HepG2 (cell line): ENCODE measurements at regions of chr4 and their contacts with region 1.

Region 1: DNA sequence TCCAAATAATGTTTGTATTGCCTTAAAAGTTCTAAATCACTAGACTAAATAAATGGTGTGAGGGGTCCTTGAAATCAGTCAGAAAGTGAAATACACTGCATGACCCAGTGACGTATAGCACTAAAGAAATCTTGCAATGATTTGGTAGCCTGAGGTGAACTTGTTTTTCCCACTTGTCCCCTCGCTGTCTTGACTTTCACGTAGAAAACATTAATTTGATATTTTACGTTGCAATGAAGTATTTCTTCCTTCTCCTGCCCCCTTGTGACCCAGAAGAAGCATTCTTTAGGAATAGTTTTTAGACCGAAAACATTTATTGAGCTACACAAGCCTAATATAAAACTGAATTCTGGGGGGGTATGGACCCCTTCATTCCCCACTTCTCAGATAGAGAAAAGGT is 3.7 kb downstream of the KLB start:
- DNase-seq: no peak
- ATAC-seq: no peak
- H3K4me3 ChIP-seq: peak overlapping the region; percentile 62 to 99 (median 75)
- H3K27ac ChIP-seq: peak overlapping the region; percentile 96
- H3K4me1 ChIP-seq: peaks cover 37% of the 10 kb centered on the region
- H3K27me3 ChIP-seq: no peaks in the 10 kb centered on the region; a peak in 1 of 5 replicates
- CTCF ChIP-seq: no peak
- EP300 ChIP-seq: no peak
- POLR2A ChIP-seq: no peak
- RAD21 ChIP-seq: no peak

Region 2: DNA sequence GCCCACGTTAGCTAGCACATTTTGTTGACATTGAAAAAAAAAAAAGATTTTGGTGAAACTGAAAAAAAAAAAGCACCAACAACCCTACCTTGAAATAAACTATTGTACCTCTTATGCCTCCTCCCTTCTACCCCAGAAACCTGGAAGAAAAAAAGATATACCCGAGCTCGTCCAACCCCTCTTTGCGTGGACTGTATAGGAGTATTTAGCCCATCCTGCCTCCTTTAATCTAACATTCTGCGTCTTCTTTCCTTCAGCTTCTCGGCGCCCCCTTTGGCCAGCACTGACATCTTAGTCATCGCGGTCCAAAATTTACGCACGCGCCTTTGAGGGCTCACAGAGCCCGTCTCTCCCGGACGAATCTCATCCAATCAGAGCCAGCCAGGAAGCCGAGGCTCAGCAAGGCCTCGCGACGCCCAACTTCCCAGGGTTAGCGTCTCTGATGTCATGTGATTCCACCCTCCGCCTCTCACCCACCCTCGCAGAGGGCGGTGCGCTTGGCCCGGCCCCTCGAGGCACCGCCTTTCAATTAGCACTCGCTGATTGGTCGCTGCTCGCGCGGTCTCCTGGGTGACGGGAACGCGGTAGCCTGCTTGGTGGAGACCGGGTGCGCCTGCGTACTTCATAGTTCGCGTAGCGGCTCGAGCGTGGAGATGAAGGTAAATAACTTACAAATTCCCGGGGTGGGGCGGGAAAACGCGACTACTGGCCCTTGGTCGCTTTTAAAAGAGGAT is 228.3 kb before region 1 on chr4 and contains the start of gene WDR19:
- CTCF ChIA-PET with region 1: no interaction called
- POLR2A ChIA-PET with region 1: interaction called, 3 read pairs
- in situ Hi-C with region 1: no loop called
- intact Hi-C with region 1: loop called (anchors 10 kb)
- DNase-seq: peak; percentile 99
- ATAC-seq: peak; percentile 99
- H3K4me3 ChIP-seq: peak within 1 kb of the TSS; percentile 91 to 96 (median 93)
- H3K27ac ChIP-seq: peak within 1 kb of the TSS; percentile 47
- H3K4me1 ChIP-seq: peaks cover 20% of the 10 kb centered on the region
- H3K27me3 ChIP-seq: no peaks in the 10 kb centered on the region
- CTCF ChIP-seq: peak; percentile 69
- EP300 ChIP-seq: no peak
- POLR2A ChIP-seq: peak in 1 of 2 experiments; percentile 33; a peak in 2 of 4 replicates
- RAD21 ChIP-seq: 0 out of 2 replicates have a peak, but pooled peaks have one; percentile 11
- total RNA-seq, gene WDR19: 20.3 and 22.9 TPM in 2 replicates

Region 3: GRCh38 chr4:39324897-39325613 is 85.4 kb before region 1 on chr4:
- CTCF ChIA-PET with region 1: no interaction called
- POLR2A ChIA-PET with region 1: interaction called, 5 read pairs
- in situ Hi-C with region 1: no loop called
- intact Hi-C with region 1: loop called (anchors 5 kb)
- DNase-seq: peak; percentile 68
- ATAC-seq: peak; percentile 90
- H3K4me3 ChIP-seq: no peak overlapping the region
- H3K27ac ChIP-seq: peak overlapping the region; percentile 48
- H3K4me1 ChIP-seq: peaks cover 64% of the 10 kb centered on the region
- H3K27me3 ChIP-seq: no peaks in the 10 kb centered on the region
- CTCF ChIP-seq: no peak
- EP300 ChIP-seq: 0 out of 4 replicates have a peak, but pooled peaks of 1 of the 2 experiments have one; percentile 11
- POLR2A ChIP-seq: no peak
- RAD21 ChIP-seq: no peak

Region 4: DNA sequence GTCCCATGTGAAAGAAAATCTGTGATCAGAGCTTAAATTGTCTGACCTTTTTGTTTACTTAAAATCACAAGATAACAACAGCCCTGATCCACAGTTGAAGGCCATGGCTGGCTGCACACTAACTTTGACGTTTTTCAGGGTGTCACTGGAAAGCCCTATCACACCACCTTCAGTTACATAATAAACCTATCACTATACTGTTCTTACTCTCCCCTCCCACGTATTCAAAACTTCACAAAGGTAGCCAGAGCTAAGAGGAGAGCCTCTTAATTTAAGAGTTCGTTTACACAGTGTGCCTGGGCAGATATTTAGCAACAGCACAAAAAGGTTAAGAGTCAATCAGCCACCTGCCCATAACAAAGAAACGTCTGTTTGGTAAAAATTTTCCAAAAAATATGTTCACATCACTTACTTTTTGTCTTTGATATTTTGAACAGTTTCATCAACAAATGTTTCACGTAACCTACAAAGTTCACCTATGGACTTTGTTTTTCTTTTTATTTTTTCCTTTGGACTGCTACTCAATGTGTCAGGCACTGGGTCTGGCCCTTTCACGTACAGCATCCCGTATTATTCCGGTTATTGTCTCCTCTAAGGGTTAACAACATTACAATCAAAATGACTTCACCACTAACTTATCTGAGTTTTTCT is 69.2 kb before region 1 on chr4:
- CTCF ChIA-PET with region 1: no interaction called
- POLR2A ChIA-PET with region 1: interaction called, 8 read pairs
- in situ Hi-C with region 1: no loop called
- intact Hi-C with region 1: loop called (anchors 2 kb)
- DNase-seq: peak; percentile 96
- ATAC-seq: peak; percentile 97
- H3K4me3 ChIP-seq: peak overlapping the region in 1 of 3 experiments; percentile 27; a peak in 1 of 6 replicates
- H3K27ac ChIP-seq: peak overlapping the region; percentile 80
- H3K4me1 ChIP-seq: peaks cover 78% of the 10 kb centered on the region
- H3K27me3 ChIP-seq: no peaks in the 10 kb centered on the region
- CTCF ChIP-seq: no peak
- EP300 ChIP-seq: peak; percentile 15 to 84; a peak in 3 of 4 replicates
- POLR2A ChIP-seq: no peak
- RAD21 ChIP-seq: no peak

Region 5: GRCh38 chr4:39365830-39366771 is 44.3 kb before region 1 on chr4 and contains the start of gene RFC1:
- CTCF ChIA-PET with region 1: no interaction called
- POLR2A ChIA-PET with region 1: interaction called, 53 read pairs
- in situ Hi-C with region 1: loop called (anchors 10 kb)
- intact Hi-C with region 1: loop called (anchors 1 kb)
- DNase-seq: peak; percentile 87
- ATAC-seq: peak; percentile 81
- H3K4me3 ChIP-seq: peak within 1 kb of the TSS; percentile 76 to 85 (median 84)
- H3K27ac ChIP-seq: peak within 1 kb of the TSS; percentile 88
- H3K4me1 ChIP-seq: peaks cover 47% of the 10 kb centered on the region
- H3K27me3 ChIP-seq: no peaks in the 10 kb centered on the region; a peak in 1 of 5 replicates
- CTCF ChIP-seq: no peak; the same call in 1 of the 2 replicates
- EP300 ChIP-seq: no peak
- POLR2A ChIP-seq: peak; percentile 65 to 77
- RAD21 ChIP-seq: 0 out of 2 replicates have a peak, but pooled peaks have one; percentile 14
- total RNA-seq, gene RFC1: 78.8 and 118 TPM in 2 replicates

Region 6: DNA sequence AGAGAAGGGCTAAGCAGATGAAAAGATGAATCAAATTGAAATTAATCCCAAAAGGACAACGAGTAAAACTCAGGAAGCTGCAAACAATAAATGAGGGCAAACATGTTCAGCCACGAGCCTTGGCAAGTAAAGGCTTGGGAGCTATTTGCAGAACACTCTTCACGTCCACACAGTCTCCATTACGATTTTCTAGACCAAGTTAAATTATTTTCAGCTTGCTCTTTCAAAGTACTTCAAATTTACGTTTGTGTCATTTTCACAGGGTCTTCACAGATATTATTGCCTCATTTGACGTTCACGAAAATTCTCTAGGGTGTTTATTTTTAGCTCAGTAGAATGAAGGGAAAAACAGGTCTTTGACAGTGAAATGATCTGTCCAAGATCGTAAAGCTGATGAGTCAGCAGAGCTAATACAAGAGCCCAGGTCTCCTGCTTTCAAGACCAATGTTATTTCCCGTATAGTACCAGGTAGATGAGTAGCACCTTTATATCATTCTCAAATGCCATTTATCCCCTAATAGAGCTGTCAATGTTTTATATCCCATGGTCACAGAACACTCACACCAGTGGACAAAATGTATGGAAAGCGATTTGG is 17.2 kb after region 1 on chr4:
- CTCF ChIA-PET with region 1: no interaction called
- POLR2A ChIA-PET with region 1: interaction called, 121 read pairs
- in situ Hi-C with region 1: no loop called
- intact Hi-C with region 1: loop called (anchors 1 kb)
- DNase-seq: no peak
- ATAC-seq: no peak
- H3K4me3 ChIP-seq: no peak overlapping the region; a peak in 1 of 6 replicates
- H3K27ac ChIP-seq: peak overlapping the region; percentile 52
- H3K4me1 ChIP-seq: peaks cover 89% of the 10 kb centered on the region
- H3K27me3 ChIP-seq: no peaks in the 10 kb centered on the region
- CTCF ChIP-seq: no peak
- EP300 ChIP-seq: no peak
- POLR2A ChIP-seq: no peak
- RAD21 ChIP-seq: no peak

Region 7: DNA sequence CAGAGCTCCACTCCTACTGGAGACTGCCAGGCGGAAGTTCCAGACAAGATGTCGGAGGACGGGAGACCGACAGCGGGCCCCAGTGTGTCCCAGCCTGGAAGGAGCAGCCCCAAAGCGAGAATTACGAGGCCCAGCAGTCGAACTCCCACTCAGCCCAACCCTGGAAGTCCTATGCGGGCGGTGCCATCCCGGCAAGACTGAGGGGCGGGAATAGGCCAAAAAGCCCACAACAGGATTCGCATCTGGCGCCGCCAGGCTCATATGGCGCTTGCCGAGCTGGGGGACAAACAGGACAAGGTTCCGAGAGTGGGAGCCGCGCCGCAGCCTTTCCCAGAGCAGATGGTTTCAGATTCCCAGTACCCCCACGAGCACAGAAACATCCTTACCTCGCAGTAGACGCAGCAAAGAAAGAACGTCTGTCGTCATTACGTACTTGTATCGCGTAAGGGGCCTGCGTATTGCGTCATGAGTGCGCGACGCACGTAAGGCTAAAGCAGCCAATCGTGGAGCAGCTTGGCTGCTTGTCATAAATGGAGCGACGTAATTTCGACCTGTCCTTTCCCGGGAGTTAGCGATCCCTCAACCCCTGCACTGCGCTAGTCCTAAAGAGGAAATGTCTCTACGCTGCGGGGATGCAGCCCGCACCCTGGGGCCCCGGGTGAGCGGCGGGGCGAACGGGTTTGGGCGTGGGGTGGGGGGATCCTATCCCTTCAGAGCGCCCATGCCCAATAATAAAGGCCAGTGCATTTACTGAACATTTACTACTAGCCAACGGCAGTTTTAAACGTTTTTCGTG is 48.3 kb after region 1 on chr4 and contains the starts of genes LIAS and RPL9:
- CTCF ChIA-PET with region 1: no interaction called
- POLR2A ChIA-PET with region 1: interaction called, 50 read pairs
- in situ Hi-C with region 1: no loop called
- intact Hi-C with region 1: loop called (anchors 2 kb)
- DNase-seq: peak; percentile 96
- ATAC-seq: peak; percentile 95
- H3K4me3 ChIP-seq: peak within 1 kb of the TSS; percentile 84 to 97 (median 93)
- H3K27ac ChIP-seq: peak within 1 kb of the TSS; percentile 87
- H3K4me1 ChIP-seq: peaks cover 51% of the 10 kb centered on the region
- H3K27me3 ChIP-seq: no peaks in the 10 kb centered on the region; a peak in 1 of 5 replicates
- CTCF ChIP-seq: no peak
- EP300 ChIP-seq: peak in 1 of 2 experiments; percentile 25; a peak in 1 of 4 replicates
- POLR2A ChIP-seq: peak; percentile 97 to 99
- RAD21 ChIP-seq: no peak; the same call in 1 of the 2 replicates
- total RNA-seq, gene LIAS: 16.6 and 18.3 TPM in 2 replicates
- total RNA-seq, gene RPL9: 2,148 and 2,808 TPM in 2 replicates